ENCODE measurements at regions of chr18 and their contacts with region 1.

Region 1: GRCh38 chr18:48767090-48767690 is 183.6 kb downstream of the SMAD7 start:
- DNase-seq: no peak
- ATAC-seq: no peak
- H3K4me3 ChIP-seq: no peak overlapping the region
- H3K27ac ChIP-seq: peak overlapping the region in 1 of 2 donors; percentile 5
- H3K4me1 ChIP-seq: no peaks in the 10 kb centered on the region
- H3K27me3 ChIP-seq: no peaks in the 10 kb centered on the region

Region 2: DNA sequence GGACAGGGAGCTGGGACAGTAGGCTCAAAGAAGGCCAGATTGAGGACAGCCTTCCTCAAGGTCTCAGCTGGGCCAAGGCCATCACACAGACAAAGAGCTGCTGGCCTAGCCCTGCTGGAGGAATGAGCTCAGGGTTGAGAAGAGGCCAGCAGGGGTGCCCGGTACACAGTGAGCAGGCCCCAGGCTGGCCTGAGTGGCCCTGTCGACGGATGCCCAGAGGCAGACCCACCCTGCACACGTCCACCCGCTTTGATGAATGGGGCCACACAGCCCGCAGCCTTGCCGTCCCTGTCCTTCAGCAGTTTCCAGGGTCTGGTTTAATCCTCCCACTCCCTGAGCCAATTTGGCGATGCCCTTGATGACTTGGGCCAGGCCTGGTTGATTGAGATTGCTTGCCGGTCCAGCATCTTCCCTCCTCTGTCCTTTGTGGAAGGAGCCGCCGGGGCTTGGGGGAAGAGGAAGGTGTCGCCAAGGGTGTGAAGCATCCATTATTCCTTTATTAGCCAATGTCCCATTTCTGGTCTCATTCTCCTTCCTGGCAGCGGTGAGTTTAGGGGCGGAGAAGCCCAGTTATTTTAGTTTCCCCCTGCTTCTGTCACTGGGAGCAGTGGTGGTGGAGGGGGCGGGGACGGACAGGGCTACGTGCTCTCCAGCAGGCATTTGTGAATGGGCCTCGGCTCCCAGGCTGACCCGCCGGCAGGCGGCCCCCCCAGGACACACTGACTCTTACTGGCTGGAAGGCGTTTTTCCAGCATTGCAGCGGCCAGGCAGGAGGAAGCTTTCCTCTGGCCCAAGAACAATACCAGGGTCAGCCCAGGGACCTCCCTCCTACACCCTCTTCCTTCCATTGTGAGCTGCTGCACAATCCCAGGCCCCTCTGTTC is 86.6 kb before region 1 on chr18:
- intact Hi-C with region 1: loop called in 1 of 2 experiments (anchors 5 kb)
- DNase-seq: peak; percentile 95
- ATAC-seq: peak; percentile 92
- H3K4me3 ChIP-seq: no peak overlapping the region
- H3K27ac ChIP-seq: peak overlapping the region; percentile 32 to 85
- H3K4me1 ChIP-seq: peaks cover 1 to 5% of the 10 kb centered on the region in 2 donors
- H3K27me3 ChIP-seq: no peaks in the 10 kb centered on the region

Region 3: GRCh38 chr18:48711651-48712486 is 55.3 kb before region 1 on chr18:
- intact Hi-C with region 1: loop called in 1 of 2 experiments (anchors 5 kb)
- DNase-seq: peak in 1 of 2 donors; percentile 55
- ATAC-seq: no peak
- H3K4me3 ChIP-seq: no peak overlapping the region
- H3K27ac ChIP-seq: no peak overlapping the region
- H3K4me1 ChIP-seq: no peaks in the 10 kb centered on the region
- H3K27me3 ChIP-seq: no peaks in the 10 kb centered on the region

Measured in aorta (tissue), 5 donors.